Left ventricle myocardium superior (tissue), 1 donor: ENCODE measurements at regions of chr22 and their contacts with region 1.

Region 1: DNA sequence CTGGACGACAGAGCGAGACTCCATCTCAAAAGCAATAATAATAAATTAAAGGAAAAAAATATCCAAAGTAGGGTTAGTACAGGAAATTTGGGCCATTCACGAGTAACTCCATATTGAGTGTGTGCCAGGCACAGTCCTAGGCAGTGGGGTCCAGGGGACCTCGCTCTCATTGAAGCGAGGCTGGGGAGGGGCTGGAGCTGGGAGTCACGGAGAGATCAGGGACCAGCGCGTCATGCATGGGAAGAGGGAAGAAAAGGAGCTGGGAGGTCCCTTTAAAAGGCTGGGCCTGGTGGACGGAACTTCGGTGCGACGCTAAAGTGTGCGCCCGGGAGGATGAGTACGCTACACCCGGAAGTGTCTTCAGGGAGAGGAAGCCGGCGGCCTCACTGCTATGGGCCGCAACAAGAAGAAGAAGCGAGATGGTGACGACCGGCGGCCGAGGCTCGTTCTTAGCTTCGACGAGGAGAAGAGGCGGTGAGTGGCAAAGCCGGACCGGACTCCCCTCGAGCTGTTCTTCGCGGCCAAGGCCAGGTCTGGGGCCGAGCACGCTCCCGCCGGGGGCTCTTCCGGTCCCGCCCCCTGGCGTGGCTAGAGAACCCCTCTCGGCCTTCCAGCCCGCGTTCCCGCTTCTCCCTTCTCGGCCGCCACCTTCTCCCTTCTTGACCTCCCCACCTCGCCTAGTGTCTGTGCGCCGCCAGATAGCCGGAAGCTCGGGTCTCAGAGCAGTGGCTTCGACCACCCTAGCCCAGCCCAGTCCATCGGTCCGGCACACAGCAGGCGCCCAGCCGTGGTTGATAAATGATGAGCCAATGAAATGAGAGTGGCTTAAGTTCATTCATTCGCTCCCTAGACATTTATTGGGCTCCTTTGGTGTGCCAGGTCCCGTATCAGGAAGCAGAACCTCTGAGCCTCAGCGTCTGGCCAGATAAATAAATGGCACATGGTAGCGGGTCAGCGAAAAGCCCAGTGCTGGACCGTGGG is at the start of gene NOL12:
- DNase-seq: peak; percentile 86
- ATAC-seq: peak; percentile 92
- total RNA-seq, gene NOL12: 12.0 TPM

Region 2: DNA sequence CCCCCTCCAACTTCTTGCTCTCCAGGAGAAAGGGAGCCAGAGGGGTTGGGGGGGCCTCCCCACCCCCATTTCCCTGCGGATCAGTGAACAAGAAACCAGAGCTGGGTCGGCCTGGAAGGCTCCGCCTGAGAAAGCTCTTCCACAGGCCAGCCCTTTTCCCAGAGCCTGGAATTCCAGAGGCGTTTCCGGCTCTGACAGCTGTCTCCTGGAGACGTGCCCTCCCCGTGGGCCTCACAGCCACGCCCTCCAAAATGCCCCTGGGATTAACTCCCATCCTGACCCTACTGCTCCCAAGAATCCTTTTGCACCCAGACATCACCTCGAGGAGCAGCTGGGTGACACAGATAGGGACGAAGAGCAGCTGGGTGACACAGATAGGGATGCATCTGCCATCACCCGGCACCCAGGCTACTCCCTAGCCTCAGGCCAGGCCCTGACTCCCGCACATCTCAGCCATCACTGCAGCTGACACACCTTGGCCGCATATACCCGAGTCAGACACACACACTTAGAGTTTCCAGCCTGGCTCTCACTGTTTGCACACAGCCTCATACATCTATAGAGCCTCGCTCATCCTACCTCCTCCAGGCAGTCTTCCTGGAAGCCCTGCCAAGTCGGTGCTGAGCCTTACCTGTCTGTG is 133.6 kb before region 1 on chr22:
- intact Hi-C with region 1: no loop called
- DNase-seq: peak; percentile 70
- ATAC-seq: peak; percentile 79

Region 3: GRCh38 chr22:37745548-37746365 is 59.5 kb after region 1 on chr22:
- intact Hi-C with region 1: no loop called
- DNase-seq: peak; percentile 97
- ATAC-seq: peak; percentile 70

Region 4: GRCh38 chr22:37797874-37798500 is 111.7 kb after region 1 on chr22:
- intact Hi-C with region 1: loop called (anchors 10 kb)
- DNase-seq: no peak
- ATAC-seq: no peak